ENCODE measurements at regions of chr1 and their contacts with region 1.

Region 1: DNA sequence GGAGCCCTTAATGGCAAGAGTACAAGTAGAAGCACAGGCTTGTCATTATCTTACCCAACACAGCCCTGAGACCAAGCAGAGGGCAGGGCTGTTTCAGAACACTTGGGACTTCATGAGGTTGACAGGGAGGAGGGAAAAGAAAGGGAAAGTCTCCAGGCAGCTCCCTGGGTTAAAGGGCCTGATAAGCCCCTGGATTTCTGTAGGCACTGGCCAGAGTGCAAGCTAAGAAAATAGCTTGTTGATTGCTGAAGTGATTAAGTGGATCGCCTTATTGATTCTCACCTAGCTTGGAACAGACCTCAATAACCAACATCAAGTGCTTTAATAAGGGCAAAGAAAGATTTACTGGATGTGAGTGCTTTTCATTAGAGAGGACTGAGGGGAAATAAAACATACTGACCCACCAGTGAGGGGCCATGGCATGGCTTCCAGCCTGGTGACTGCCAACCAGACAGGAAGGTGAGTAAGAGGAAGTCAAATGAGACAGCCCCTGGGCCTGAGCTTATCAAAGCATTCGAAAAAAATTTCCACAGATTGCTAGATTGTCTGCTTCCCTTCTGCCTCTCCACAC is 121.4 kb upstream of the NFIA start:
- DNase-seq: peak; percentile 96
- H3K4me3 ChIP-seq: no peak overlapping the region
- H3K27ac ChIP-seq: peak overlapping the region; percentile 98
- H3K4me1 ChIP-seq: peaks cover 68% of the 10 kb centered on the region
- H3K27me3 ChIP-seq: no peaks in the 10 kb centered on the region
- CTCF ChIP-seq: no peak
- POLR2A ChIP-seq: no peak

Region 2: GRCh38 chr1:60153961-60154360 is 807.0 kb before region 1 on chr1:
- CTCF ChIA-PET with region 1: no interaction called
- POLR2A ChIA-PET with region 1: no interaction called
- dilution Hi-C with region 1: no loop called
- intact Hi-C with region 1: loop called (anchors 5 kb)
- DNase-seq: no peak
- H3K4me3 ChIP-seq: no peak overlapping the region
- H3K27ac ChIP-seq: no peak overlapping the region
- H3K4me1 ChIP-seq: no peaks in the 10 kb centered on the region
- H3K27me3 ChIP-seq: no peaks in the 10 kb centered on the region
- CTCF ChIP-seq: no peak
- POLR2A ChIP-seq: no peak

Region 3: DNA sequence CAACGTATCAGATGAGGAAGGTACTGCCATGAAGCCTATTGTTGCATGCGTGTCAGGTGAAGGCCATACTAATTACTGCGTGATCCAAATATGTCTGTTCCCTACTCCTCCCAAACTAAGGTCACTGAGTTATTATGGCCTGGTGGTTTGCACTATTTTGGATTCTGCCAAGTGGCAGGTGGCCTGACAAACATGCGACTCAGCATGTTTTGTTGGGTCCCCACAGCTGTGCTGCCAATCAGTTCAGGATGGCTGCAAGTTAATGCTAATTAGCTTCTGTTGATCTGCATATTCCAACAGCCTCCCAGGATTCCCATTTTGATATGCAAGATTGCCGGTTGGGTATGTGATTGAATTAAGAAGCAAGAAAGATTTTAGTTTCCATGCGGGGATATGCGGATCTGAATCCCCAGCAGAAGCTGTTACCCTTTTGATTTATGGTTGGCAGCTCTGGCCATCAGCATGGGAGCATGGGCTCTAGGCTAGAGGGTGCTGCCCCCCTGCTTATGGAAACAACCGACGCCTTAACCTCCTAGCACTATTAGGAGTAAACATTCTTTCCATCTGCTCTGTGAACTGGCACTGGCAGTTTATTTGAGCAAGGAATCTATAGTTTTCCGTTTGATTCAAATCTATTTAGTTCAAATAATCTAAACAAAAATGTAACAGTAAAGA is 457.6 kb before region 1 on chr1:
- CTCF ChIA-PET with region 1: no interaction called
- POLR2A ChIA-PET with region 1: no interaction called
- dilution Hi-C with region 1: no loop called
- intact Hi-C with region 1: loop called (anchors 5 kb)
- DNase-seq: peak; percentile 38
- H3K4me3 ChIP-seq: no peak overlapping the region
- H3K27ac ChIP-seq: no peak overlapping the region
- H3K4me1 ChIP-seq: peaks cover 22% of the 10 kb centered on the region
- H3K27me3 ChIP-seq: no peaks in the 10 kb centered on the region
- CTCF ChIP-seq: no peak
- POLR2A ChIP-seq: no peak

Region 4: GRCh38 chr1:60705026-60705425 is 255.9 kb before region 1 on chr1:
- CTCF ChIA-PET with region 1: no interaction called
- POLR2A ChIA-PET with region 1: no interaction called
- dilution Hi-C with region 1: no loop called
- intact Hi-C with region 1: no loop called
- DNase-seq: no peak
- H3K4me3 ChIP-seq: no peak overlapping the region
- H3K27ac ChIP-seq: no peak overlapping the region
- H3K4me1 ChIP-seq: no peaks in the 10 kb centered on the region
- H3K27me3 ChIP-seq: no peaks in the 10 kb centered on the region
- CTCF ChIP-seq: no peak
- POLR2A ChIP-seq: no peak

Region 5: GRCh38 chr1:60848583-60849188 is 112.3 kb before region 1 on chr1:
- CTCF ChIA-PET with region 1: interaction called, 40 read pairs
- POLR2A ChIA-PET with region 1: no interaction called
- dilution Hi-C with region 1: no loop called
- intact Hi-C with region 1: loop called (anchors 1 kb)
- DNase-seq: peak; percentile 79
- H3K4me3 ChIP-seq: no peak overlapping the region
- H3K27ac ChIP-seq: no peak overlapping the region
- H3K4me1 ChIP-seq: no peaks in the 10 kb centered on the region
- H3K27me3 ChIP-seq: no peaks in the 10 kb centered on the region
- CTCF ChIP-seq: peak; percentile 35 to 45
- POLR2A ChIP-seq: no peak

Region 6: DNA sequence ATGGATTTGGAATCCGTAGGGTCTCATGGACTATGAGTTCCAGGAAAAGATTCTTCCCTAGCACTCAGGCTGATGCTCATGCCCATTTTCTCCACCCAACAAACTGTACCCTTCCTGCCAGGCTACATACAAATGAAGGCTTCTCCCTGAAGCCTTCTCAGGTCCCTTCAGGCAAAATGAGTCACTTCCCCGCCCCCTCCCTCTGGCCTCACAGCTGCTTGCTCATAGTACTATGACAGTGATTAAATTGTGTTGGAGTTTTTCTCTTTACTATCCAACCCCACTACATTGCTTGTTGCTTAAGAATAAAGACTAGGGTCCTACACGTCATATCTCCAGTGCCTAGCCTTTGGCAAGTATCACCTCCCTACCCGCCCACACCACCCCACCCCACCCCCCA is 86.3 kb before region 1 on chr1:
- CTCF ChIA-PET with region 1: no interaction called
- POLR2A ChIA-PET with region 1: no interaction called
- dilution Hi-C with region 1: no loop called
- intact Hi-C with region 1: loop called (anchors 1 kb)
- DNase-seq: peak; percentile 82
- H3K4me3 ChIP-seq: no peak overlapping the region
- H3K27ac ChIP-seq: peak overlapping the region; percentile 36
- H3K4me1 ChIP-seq: peaks cover 21% of the 10 kb centered on the region
- H3K27me3 ChIP-seq: no peaks in the 10 kb centered on the region
- CTCF ChIP-seq: no peak
- POLR2A ChIP-seq: no peak

Region 7: GRCh38 chr1:60904089-60904851 is 56.7 kb before region 1 on chr1:
- CTCF ChIA-PET with region 1: no interaction called
- POLR2A ChIA-PET with region 1: no interaction called
- dilution Hi-C with region 1: no loop called
- intact Hi-C with region 1: no loop called
- DNase-seq: no peak
- H3K4me3 ChIP-seq: no peak overlapping the region
- H3K27ac ChIP-seq: no peak overlapping the region
- H3K4me1 ChIP-seq: no peaks in the 10 kb centered on the region
- H3K27me3 ChIP-seq: no peaks in the 10 kb centered on the region
- CTCF ChIP-seq: no peak
- POLR2A ChIP-seq: no peak

Region 8: DNA sequence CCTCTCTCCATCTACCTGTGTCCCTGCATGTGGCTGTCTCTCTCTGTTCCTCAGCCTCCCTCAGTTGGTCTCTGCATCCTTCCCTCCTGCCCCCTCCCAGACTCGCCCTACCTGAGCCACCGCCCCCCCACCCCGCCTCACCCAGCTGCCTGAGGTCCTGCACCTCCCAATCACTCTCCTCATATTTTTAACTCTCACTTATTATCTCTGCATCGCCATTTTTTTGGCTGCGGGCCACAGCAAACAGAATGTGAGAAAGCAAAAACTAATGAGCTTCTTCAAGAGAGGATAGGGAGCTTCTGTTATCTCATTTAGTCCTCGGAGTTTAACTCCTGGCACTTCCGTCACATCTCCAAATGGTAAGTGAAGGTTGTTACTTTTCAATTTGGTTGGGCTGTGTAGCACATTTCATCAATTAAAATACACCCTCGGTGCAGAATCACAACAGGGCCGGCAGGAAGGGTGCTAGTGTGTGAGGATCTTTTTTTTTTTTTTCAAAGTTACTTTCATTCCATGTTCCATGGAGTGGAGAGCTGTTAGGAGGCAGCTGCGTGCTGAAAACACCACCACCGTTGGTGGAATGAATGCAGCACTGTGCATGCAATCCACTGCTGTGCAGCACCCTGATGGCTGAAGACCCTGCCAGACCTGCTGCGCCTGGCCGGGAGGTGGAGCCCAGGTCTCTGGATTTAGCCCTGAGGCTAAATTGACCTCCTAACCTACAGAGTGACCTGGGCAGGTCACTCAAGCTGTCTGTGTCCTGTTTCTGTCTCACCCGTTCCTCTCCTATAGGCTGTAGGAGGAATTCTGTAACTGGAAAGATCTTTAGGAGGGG is 35.8 kb before region 1 on chr1:
- CTCF ChIA-PET with region 1: no interaction called
- POLR2A ChIA-PET with region 1: no interaction called
- dilution Hi-C with region 1: no loop called
- intact Hi-C with region 1: no loop called
- DNase-seq: no peak
- H3K4me3 ChIP-seq: no peak overlapping the region
- H3K27ac ChIP-seq: no peak overlapping the region
- H3K4me1 ChIP-seq: peaks cover 10% of the 10 kb centered on the region
- H3K27me3 ChIP-seq: no peaks in the 10 kb centered on the region
- CTCF ChIP-seq: no peak
- POLR2A ChIP-seq: no peak

Region 9: DNA sequence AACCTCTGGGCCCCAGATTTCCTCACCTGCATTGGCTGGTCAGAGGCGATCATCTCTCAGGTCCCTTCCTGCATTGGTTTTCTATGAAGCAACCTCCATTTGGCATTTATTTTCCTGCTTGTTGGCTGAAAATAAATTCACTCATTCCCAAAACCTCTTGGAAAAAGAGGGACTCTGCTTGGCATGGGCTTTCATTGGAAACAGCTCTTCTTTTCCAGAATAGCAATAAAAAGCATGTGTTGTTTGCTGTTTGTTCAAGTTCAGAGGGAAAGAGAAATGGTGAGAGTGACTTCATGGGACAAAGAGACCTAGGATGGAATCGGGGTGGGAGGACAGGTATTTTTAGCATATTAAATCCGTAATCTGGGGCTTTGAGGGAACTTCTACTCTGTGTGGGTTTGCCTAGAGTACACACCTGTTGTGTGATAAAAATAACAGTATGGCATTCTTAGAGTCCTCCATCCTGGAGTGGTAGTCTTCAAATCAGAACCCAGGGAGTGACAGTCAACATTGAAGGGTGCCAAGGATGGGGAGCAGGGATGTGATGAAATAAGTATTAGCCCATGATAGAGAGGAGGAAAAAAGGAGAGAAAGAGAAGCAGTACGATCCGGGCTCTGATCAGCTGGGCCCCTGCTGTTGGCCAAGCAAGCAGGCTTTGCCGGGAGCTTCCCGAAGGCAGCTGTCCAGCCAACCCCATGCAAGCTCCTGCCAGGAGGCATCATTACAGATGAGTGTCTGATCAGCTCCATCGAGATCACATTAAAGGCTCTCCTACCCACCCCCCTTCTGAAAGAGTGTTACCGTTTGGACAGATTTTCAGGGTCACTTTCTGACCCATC is 10.5 kb before region 1 on chr1:
- CTCF ChIA-PET with region 1: interaction called, 6 read pairs
- POLR2A ChIA-PET with region 1: interaction called, 5 read pairs
- dilution Hi-C with region 1: no loop called
- intact Hi-C with region 1: loop called (anchors 1 kb)
- DNase-seq: no peak
- H3K4me3 ChIP-seq: no peak overlapping the region
- H3K27ac ChIP-seq: no peak overlapping the region
- H3K4me1 ChIP-seq: peaks cover 29% of the 10 kb centered on the region
- H3K27me3 ChIP-seq: no peaks in the 10 kb centered on the region
- CTCF ChIP-seq: no peak
- POLR2A ChIP-seq: no peak